Tibial artery (tissue), 4 donors: ENCODE measurements at regions of chr3 and their contacts with region 1.

Region 1: DNA sequence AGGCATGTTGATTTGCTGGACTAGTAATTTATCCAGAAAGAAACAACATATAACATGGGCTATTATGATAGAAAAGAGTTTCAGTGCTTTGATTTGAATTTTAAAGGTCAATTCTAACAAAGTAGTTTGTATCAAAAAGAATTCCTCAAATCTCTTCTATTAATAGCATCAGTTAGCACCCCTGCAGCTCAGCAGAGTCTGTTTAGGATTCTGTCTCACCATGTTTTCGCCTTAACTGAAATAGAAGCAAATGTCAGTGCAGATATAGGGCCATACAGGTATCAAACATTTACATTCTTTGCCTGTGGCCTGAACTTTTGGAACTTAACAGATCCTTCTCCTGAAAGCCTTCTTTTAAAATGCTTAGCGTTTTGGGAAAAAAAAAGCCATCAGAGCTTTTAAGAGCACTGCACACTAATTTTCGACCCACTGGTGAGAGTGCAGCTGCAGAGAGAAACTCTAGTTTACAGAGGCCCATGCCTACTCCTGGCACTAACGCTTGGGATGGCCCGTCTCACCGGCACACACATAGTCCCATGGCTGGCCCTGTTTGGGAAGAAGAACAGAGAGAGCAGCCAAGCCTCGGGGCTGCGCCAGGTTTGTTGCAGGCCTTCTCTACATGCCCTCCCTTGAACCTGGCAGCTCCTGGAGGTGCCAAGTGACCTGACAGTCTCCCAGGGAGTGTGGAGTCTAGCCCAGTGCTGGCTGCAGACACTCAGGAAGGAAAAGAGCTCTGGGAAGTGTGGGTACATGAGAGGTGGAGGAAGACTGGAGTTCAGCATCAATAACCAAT is 9.9 kb upstream of the PAQR9 start:
- DNase-seq: no peak
- H3K4me3 ChIP-seq: no peak overlapping the region
- H3K27ac ChIP-seq: no peak overlapping the region
- H3K4me1 ChIP-seq: peaks cover 0 to 6% (median 2%) of the 10 kb centered on the region in 4 donors
- H3K27me3 ChIP-seq: no peaks in the 10 kb centered on the region
- CTCF ChIP-seq: no peak

Region 2: GRCh38 chr3:142608645-142609535 is 364.5 kb before region 1 on chr3:
- intact Hi-C with region 1: loop called (anchors 5 kb)
- DNase-seq: no peak
- H3K4me3 ChIP-seq: no peak overlapping the region
- H3K27ac ChIP-seq: no peak overlapping the region
- H3K4me1 ChIP-seq: no peaks in the 10 kb centered on the region
- H3K27me3 ChIP-seq: no peaks in the 10 kb centered on the region
- CTCF ChIP-seq: no peak

Region 3: GRCh38 chr3:142680710-142681109 is 292.7 kb before region 1 on chr3:
- intact Hi-C with region 1: no loop called
- DNase-seq: no peak
- H3K4me3 ChIP-seq: no peak overlapping the region
- H3K27ac ChIP-seq: no peak overlapping the region
- H3K4me1 ChIP-seq: no peaks in the 10 kb centered on the region
- H3K27me3 ChIP-seq: no peaks in the 10 kb centered on the region
- CTCF ChIP-seq: no peak